ENCODE measurements at regions of chr4 and their contacts with region 1.

Region 1: GRCh38 chr4:25312496-25313200 is at the start of gene ZCCHC4:
- DNase-seq: peak; percentile 97
- ATAC-seq: peak; percentile 100
- H3K4me3 ChIP-seq: peak within 1 kb of the TSS; percentile 68 to 85 (median 83)
- H3K4me3 Mint-ChIP-seq: peak within 1 kb of the TSS; percentile 98
- H3K27ac ChIP-seq: peak within 1 kb of the TSS; percentile 66 to 82
- H3K27ac Mint-ChIP-seq: peak within 1 kb of the TSS; percentile 97
- H3K4me1 ChIP-seq: peaks cover 27 to 29% of the 10 kb centered on the region in 2 donors
- H3K4me1 Mint-ChIP-seq: peaks cover 45% of the 10 kb centered on the region
- H3K27me3 ChIP-seq: no peaks in the 10 kb centered on the region
- H3K27me3 Mint-ChIP-seq: no peaks in the 10 kb centered on the region
- CTCF ChIP-seq: peak; percentile 99
- total RNA-seq, gene ZCCHC4: 19.5 and 22.4 TPM in 2 replicates

Region 2: GRCh38 chr4:24642981-24643547 is 669.6 kb before region 1 on chr4:
- CTCF ChIA-PET with region 1: no interaction called
- POLR2A ChIA-PET with region 1: no interaction called
- intact Hi-C with region 1: no loop called
- DNase-seq: no peak
- ATAC-seq: no peak
- H3K4me3 ChIP-seq: no peak overlapping the region
- H3K4me3 Mint-ChIP-seq: no peak overlapping the region
- H3K27ac ChIP-seq: no peak overlapping the region
- H3K27ac Mint-ChIP-seq: no peak overlapping the region
- H3K4me1 ChIP-seq: no peaks in the 10 kb centered on the region
- H3K4me1 Mint-ChIP-seq: no peaks in the 10 kb centered on the region
- H3K27me3 ChIP-seq: peaks cover 0 to 5% (median 3%) of the 10 kb centered on the region in 4 experiments
- H3K27me3 Mint-ChIP-seq: peaks cover 26% of the 10 kb centered on the region
- CTCF ChIP-seq: no peak

Region 3: GRCh38 chr4:25060963-25061340 is 251.7 kb before region 1 on chr4:
- CTCF ChIA-PET with region 1: no interaction called
- POLR2A ChIA-PET with region 1: no interaction called
- intact Hi-C with region 1: no loop called
- DNase-seq: no peak
- ATAC-seq: no peak
- H3K4me3 ChIP-seq: no peak overlapping the region
- H3K4me3 Mint-ChIP-seq: no peak overlapping the region
- H3K27ac ChIP-seq: no peak overlapping the region
- H3K27ac Mint-ChIP-seq: no peak overlapping the region
- H3K4me1 ChIP-seq: no peaks in the 10 kb centered on the region
- H3K4me1 Mint-ChIP-seq: no peaks in the 10 kb centered on the region
- H3K27me3 ChIP-seq: no peaks in the 10 kb centered on the region
- H3K27me3 Mint-ChIP-seq: peaks cover 19% of the 10 kb centered on the region
- CTCF ChIP-seq: no peak

Region 4: DNA sequence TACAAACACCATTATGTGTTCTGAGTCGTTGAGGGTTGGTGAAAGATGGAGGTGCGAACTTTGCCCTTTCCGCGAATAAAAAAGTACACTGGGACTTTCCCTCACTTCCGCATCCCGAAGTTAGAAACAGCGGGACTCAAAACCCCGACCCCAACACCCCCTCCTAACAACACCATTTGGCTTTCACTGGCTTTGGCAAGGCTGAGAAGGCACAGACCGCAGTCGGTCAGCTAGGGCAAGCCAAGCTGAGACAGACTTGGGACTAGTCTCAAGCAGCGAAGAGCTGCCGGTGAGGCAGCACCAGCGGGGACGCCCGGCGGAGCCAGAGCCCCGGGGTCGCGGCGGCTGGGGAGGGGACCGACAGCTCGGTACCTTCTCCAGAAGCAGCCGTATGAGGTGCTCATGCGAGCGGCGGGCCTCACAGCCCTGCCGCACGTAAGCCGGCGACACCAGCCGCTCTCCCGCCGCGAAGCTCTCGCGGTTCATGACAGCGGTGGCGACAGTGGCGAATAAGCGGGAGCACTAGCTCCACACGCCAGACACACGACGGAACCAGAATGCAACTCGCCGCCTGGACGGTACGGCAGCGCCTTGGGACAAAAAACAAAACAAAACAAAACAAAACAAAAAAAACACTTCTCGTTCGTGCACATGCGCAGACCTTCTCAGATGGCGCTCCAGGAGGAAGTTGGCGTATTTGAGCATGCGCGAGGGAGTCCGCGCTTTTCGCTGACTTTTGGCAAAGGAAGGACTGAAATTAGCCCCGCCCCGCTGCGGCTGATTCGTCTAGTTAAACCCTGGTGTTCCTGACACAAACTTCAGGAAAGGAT is 152.5 kb before region 1 on chr4 and contains the start of gene SEPSECS:
- CTCF ChIA-PET with region 1: interaction called, 14 read pairs
- POLR2A ChIA-PET with region 1: interaction called, 12 read pairs
- intact Hi-C with region 1: loop called (anchors 1 kb)
- DNase-seq: peak; percentile 97
- ATAC-seq: peak; percentile 79
- H3K4me3 ChIP-seq: peak within 1 kb of the TSS; percentile 88 to 99 (median 96)
- H3K4me3 Mint-ChIP-seq: peak within 1 kb of the TSS; percentile 93
- H3K27ac ChIP-seq: peak within 1 kb of the TSS; percentile 92 to 98
- H3K27ac Mint-ChIP-seq: peak within 1 kb of the TSS; percentile 97
- H3K4me1 ChIP-seq: peaks cover 20 to 24% of the 10 kb centered on the region in 2 donors
- H3K4me1 Mint-ChIP-seq: peaks cover 40% of the 10 kb centered on the region
- H3K27me3 ChIP-seq: no peaks in the 10 kb centered on the region
- H3K27me3 Mint-ChIP-seq: no peaks in the 10 kb centered on the region
- CTCF ChIP-seq: no peak
- total RNA-seq, gene SEPSECS: 16.3 and 17.0 TPM in 2 replicates

Region 5: DNA sequence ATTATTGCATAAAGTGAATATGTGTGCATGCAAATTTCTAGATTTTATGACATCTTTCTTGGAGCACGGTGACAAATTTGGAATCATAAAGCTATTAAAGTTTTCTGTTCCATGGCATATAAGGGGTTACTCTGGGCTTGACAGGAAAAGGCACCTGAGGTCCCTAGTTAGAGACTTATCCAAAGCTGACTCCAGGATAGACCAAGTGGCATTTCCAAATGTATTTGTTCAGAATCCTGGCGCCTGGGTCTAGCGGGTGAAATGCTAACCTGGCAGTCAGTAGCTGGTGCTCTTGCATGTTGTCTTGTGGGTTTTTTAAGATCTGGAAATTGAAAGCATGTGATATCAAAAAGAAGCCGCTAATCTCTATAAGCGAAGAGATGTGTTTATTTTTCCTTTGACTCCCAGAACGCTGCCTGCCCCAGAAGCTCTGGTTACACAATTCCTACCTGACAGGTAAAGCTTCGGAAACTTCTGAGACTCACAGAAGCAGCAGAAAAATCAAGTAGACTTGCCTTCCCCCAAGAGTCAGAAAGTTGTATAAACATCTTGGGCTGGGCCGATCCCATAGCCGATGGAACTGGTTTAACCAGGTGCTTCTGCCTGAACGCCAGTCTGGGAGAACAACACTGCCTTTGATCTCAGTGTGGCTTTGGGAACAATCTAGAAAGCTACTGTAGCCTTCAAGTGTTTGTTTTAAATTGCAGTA is 13.0 kb before region 1 on chr4:
- CTCF ChIA-PET with region 1: interaction called, 10 read pairs
- POLR2A ChIA-PET with region 1: no interaction called
- intact Hi-C with region 1: no loop called
- DNase-seq: no peak
- ATAC-seq: no peak
- H3K4me3 ChIP-seq: no peak overlapping the region
- H3K4me3 Mint-ChIP-seq: no peak overlapping the region
- H3K27ac ChIP-seq: no peak overlapping the region
- H3K27ac Mint-ChIP-seq: no peak overlapping the region
- H3K4me1 ChIP-seq: no peaks in the 10 kb centered on the region
- H3K4me1 Mint-ChIP-seq: peaks cover 9% of the 10 kb centered on the region
- H3K27me3 ChIP-seq: no peaks in the 10 kb centered on the region
- H3K27me3 Mint-ChIP-seq: peaks cover 16% of the 10 kb centered on the region
- CTCF ChIP-seq: no peak

Region 6: GRCh38 chr4:25376754-25377571 is 64.3 kb after region 1 on chr4 and contains the start of gene ANAPC4:
- CTCF ChIA-PET with region 1: interaction called, 13 read pairs
- POLR2A ChIA-PET with region 1: interaction called, 4 read pairs
- intact Hi-C with region 1: loop called (anchors 1 kb)
- DNase-seq: peak; percentile 96
- ATAC-seq: peak; percentile 96
- H3K4me3 ChIP-seq: peak within 1 kb of the TSS; percentile 76 to 92 (median 86)
- H3K4me3 Mint-ChIP-seq: no peak within 1 kb of the TSS
- H3K27ac ChIP-seq: peak within 1 kb of the TSS; percentile 28 to 64
- H3K27ac Mint-ChIP-seq: peak within 1 kb of the TSS; percentile 82
- H3K4me1 ChIP-seq: peaks cover 15 to 23% of the 10 kb centered on the region in 2 donors
- H3K4me1 Mint-ChIP-seq: peaks cover 9% of the 10 kb centered on the region
- H3K27me3 ChIP-seq: no peaks in the 10 kb centered on the region
- H3K27me3 Mint-ChIP-seq: no peaks in the 10 kb centered on the region
- CTCF ChIP-seq: peak; percentile 9
- total RNA-seq, gene ANAPC4: 52.6 and 62.5 TPM in 2 replicates

Region 7: DNA sequence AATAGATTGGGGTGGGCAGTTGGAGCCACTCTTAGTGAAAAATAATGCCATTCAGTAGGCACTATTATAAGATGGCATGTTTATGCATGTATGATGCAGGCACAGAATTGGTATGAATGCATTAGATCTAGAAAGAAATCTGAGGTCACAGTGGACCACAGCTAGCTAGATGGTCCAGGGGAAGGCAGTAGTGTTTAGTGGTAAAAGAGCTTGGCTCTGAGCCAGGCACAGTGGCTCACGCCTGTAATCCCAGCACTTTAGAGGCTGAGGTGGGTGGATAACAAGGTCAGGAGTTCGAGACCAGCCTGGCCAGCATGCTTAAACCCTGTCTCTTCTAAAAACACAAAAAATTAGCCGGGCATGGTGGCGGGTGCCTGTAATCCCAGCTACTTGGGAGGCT is 299.8 kb after region 1 on chr4:
- CTCF ChIA-PET with region 1: no interaction called
- POLR2A ChIA-PET with region 1: no interaction called
- intact Hi-C with region 1: no loop called
- DNase-seq: no peak
- ATAC-seq: no peak
- H3K4me3 ChIP-seq: no peak overlapping the region
- H3K4me3 Mint-ChIP-seq: no peak overlapping the region
- H3K27ac ChIP-seq: no peak overlapping the region
- H3K27ac Mint-ChIP-seq: no peak overlapping the region
- H3K4me1 ChIP-seq: no peaks in the 10 kb centered on the region
- H3K4me1 Mint-ChIP-seq: no peaks in the 10 kb centered on the region
- H3K27me3 ChIP-seq: no peaks in the 10 kb centered on the region
- H3K27me3 Mint-ChIP-seq: no peaks in the 10 kb centered on the region
- CTCF ChIP-seq: no peak

Region 8: DNA sequence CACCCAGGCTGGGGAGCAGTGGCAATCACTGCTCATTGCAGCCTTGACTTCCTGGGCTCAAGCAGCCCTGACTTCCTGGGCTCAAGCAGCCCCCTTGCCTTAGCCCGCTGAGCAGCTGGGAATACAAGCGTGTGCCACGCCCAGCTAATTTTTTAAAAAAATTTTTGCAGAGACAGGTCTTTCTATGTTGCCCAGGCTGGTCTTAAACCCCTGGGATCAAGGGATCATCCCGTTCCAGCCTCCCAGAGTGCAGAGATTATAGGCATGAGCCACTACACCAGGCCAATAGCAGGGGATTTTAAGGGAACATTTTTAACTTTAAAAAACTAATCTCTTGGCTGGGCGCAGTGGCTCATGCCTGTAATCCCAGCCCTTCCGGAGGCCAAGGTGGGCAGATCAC is 337.7 kb after region 1 on chr4:
- CTCF ChIA-PET with region 1: no interaction called
- POLR2A ChIA-PET with region 1: no interaction called
- intact Hi-C with region 1: no loop called
- DNase-seq: no peak
- ATAC-seq: no peak
- H3K4me3 ChIP-seq: no peak overlapping the region
- H3K4me3 Mint-ChIP-seq: no peak overlapping the region
- H3K27ac ChIP-seq: no peak overlapping the region
- H3K27ac Mint-ChIP-seq: no peak overlapping the region
- H3K4me1 ChIP-seq: peaks cover 0 to 3% of the 10 kb centered on the region in 2 donors
- H3K4me1 Mint-ChIP-seq: peaks cover 2% of the 10 kb centered on the region
- H3K27me3 ChIP-seq: peaks cover 0 to 14% (median 0%) of the 10 kb centered on the region in 4 experiments
- H3K27me3 Mint-ChIP-seq: peaks cover 12% of the 10 kb centered on the region
- CTCF ChIP-seq: no peak

Region 9: DNA sequence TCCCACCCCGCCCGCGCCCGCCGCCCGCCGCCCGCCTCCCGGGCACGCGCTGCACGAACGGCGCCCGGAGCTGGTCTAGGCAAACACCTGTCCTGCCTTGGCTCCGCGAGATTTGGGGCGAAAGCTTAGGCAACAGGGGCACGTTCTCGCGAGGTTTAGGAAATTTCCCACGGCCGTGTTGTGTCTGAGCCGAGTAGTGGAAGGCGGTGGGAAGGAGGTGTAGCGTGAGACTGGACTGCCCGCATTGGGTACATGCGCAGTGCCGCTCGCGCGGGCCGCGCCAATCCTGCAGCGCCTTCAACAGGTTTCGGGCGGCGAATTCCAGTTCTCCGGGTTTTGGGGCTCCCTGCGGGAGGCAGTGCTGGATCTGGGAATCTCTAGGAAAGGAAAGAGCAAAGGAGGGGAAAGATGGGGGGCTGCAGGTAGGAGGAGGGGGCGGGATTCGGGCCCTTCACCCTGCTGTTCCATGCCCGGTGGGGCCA is 1006.9 kb after region 1 on chr4:
- CTCF ChIA-PET with region 1: no interaction called
- POLR2A ChIA-PET with region 1: no interaction called
- intact Hi-C with region 1: loop called (anchors 10 kb)
- DNase-seq: peak; percentile 97
- ATAC-seq: peak; percentile 73
- H3K4me3 ChIP-seq: peak overlapping the region; percentile 75 to 91 (median 87)
- H3K4me3 Mint-ChIP-seq: peak overlapping the region; percentile 99
- H3K27ac ChIP-seq: peak overlapping the region; percentile 78 to 89
- H3K27ac Mint-ChIP-seq: peak overlapping the region; percentile 99
- H3K4me1 ChIP-seq: peaks cover 13 to 22% of the 10 kb centered on the region in 2 donors
- H3K4me1 Mint-ChIP-seq: peaks cover 27% of the 10 kb centered on the region
- H3K27me3 ChIP-seq: no peaks in the 10 kb centered on the region
- H3K27me3 Mint-ChIP-seq: no peaks in the 10 kb centered on the region
- CTCF ChIP-seq: no peak